H1 (cell line): ENCODE measurements at regions of chr10 and their contacts with region 1.

Region 1: DNA sequence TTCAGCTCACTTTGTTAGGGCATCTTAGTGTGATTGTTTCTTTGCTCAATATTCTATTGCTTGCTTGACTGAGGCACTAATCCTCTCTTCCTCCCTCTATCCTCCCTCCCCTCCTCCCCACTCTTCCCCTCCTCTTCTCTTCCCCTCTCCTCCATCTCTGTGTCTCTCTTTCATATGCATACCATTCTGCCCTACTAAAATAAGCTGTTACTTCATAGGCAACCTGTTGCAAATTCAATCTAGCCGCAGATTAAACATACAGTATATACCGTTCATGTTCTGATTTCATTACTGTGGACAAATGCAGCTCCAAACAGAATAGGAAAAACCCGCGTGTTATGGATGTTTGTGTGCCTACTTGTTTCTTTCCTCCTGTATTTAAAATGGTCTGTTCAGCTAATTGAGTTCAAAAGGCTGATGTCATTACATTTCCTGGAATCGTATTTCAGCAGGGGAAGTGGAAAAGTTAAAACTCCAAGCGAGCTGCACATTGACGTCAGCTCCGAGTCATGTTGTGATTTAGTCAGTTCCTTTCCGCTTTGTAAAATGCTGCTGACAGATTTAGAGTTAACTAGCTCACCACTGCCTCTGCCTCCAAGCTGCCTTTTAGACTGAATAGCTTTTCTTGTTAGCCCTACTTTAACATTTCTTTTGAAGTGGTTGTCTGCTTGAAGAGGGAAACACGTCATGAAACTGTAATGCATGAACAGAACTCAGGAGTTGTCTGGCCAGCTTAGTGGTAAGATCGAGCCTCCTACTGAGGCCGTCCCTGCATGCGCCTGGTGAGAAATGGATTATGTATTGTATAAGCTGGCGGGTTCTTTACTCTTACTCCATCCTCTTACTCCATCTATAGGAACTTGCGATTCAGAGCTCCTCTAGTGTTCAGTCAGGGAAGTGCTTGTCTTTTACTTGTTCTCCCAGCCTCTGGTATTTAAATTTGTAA is 69.0 kb downstream of the CREM start:
- DNase-seq: no peak
- H3K4me3 ChIP-seq: peak overlapping the region; percentile 31 to 62 (median 38); a peak in 7 of 8 replicates
- H3K27ac ChIP-seq: 0 out of 2 replicates have a peak overlapping the region, but pooled peaks have one; percentile 11
- H3K4me1 ChIP-seq: peaks cover 0 to 4% (median 2%) of the 10 kb centered on the region in 4 experiments; a peak in 3 of 7 replicates
- H3K27me3 ChIP-seq: no peaks in the 10 kb centered on the region
- CTCF ChIP-seq: peak in 2 of 3 experiments; percentile 67 to 68; a peak in 3 of 4 replicates
- EP300 ChIP-seq: no peak
- POLR2A ChIP-seq: peak in 1 of 2 experiments; percentile 39; a peak in 1 of 3 replicates
- RAD21 ChIP-seq: peak; percentile 60 to 63

Region 2: GRCh38 chr10:35119378-35119777 is 76.3 kb before region 1 on chr10:
- CTCF ChIA-PET with region 1: interaction called, 26 read pairs
- POLR2A ChIA-PET with region 1: no interaction called
- DNase-seq: no peak
- H3K4me3 ChIP-seq: no peak overlapping the region
- H3K27ac ChIP-seq: no peak overlapping the region
- H3K4me1 ChIP-seq: no peaks in the 10 kb centered on the region
- H3K27me3 ChIP-seq: no peaks in the 10 kb centered on the region
- CTCF ChIP-seq: no peak
- EP300 ChIP-seq: no peak
- POLR2A ChIP-seq: no peak
- RAD21 ChIP-seq: no peak

Region 3: GRCh38 chr10:35172574-35172973 is 23.1 kb before region 1 on chr10:
- CTCF ChIA-PET with region 1: interaction called, 11 read pairs
- POLR2A ChIA-PET with region 1: no interaction called
- DNase-seq: no peak
- H3K4me3 ChIP-seq: no peak overlapping the region
- H3K27ac ChIP-seq: no peak overlapping the region
- H3K4me1 ChIP-seq: no peaks in the 10 kb centered on the region
- H3K27me3 ChIP-seq: no peaks in the 10 kb centered on the region
- CTCF ChIP-seq: no peak
- EP300 ChIP-seq: no peak
- POLR2A ChIP-seq: no peak
- RAD21 ChIP-seq: no peak

Region 4: DNA sequence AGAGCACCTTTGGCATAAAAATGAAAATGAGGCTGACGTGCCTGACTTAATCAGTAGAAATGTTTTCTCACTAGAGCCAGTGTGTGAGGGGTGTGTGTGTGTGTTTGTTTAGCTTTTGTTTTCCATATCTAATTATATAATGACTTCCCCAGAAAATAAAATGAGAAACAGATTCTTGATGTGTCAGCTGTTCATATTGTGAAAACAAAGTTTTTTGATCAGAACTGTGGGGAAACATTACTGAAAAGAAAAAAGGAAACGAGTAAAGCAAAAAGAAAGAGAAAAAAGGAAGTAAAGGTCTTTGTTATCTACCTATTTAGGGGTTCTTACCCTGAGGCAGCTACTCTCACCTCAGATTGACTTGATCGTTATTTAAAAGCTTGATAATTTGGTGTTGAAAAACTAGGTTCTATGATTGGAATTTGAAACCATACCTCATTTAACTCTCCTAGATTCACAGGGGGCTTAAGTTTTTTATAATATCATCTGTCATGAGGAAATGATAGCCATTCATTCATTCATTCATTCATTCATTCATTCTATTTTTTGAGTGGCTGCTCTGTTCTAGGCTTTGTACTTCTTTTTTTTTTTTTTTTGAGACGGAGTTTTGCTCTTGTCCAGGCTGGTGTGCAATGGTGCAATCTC is 11.0 kb before region 1 on chr10:
- CTCF ChIA-PET with region 1: interaction called, 22 read pairs
- POLR2A ChIA-PET with region 1: interaction called, 3 read pairs
- DNase-seq: no peak
- H3K4me3 ChIP-seq: no peak overlapping the region
- H3K27ac ChIP-seq: no peak overlapping the region
- H3K4me1 ChIP-seq: no peaks in the 10 kb centered on the region
- H3K27me3 ChIP-seq: no peaks in the 10 kb centered on the region
- CTCF ChIP-seq: no peak
- EP300 ChIP-seq: no peak
- POLR2A ChIP-seq: no peak
- RAD21 ChIP-seq: no peak

Region 5: DNA sequence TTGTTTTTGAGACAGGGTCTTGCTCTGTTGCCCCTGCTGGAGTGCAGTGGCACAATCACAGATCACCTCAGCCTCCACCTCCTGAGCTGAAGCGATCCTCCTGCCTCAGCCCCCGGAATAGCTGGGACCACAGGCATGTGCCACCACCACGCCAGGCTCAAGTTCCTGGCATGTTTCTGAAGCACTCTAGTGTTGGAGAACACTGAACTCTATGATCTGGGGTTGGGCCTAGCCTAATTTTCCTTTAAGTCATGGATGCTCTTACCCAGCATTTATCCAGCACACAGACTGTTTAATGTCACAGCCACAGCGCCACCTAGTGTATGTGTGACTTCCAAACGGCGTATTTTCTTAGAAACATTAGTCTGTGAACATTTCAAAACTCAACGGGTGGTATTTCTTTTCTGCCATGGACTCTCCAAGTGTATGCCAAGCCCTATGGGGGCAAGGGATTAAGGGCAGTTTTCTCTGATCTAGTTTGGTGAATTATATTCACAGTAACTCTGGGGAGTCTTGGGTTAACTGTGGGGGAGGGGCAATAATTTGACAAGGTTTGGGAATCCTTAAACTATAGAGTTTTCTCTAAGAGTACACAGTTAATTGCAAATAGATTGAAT is 22.8 kb after region 1 on chr10:
- CTCF ChIA-PET with region 1: interaction called, 21 read pairs
- POLR2A ChIA-PET with region 1: no interaction called
- DNase-seq: peak in 1 of 2 experiments; percentile 77
- H3K4me3 ChIP-seq: no peak overlapping the region
- H3K27ac ChIP-seq: no peak overlapping the region
- H3K4me1 ChIP-seq: no peaks in the 10 kb centered on the region; a peak in 1 of 7 replicates
- H3K27me3 ChIP-seq: peaks cover 0 to 1% (median 0%) of the 10 kb centered on the region in 4 experiments; a peak in 1 of 7 replicates
- CTCF ChIP-seq: peak in 2 of 3 experiments; percentile 81 to 83; a peak in 3 of 4 replicates
- EP300 ChIP-seq: no peak
- POLR2A ChIP-seq: no peak
- RAD21 ChIP-seq: peak; percentile 75 to 85

Region 6: DNA sequence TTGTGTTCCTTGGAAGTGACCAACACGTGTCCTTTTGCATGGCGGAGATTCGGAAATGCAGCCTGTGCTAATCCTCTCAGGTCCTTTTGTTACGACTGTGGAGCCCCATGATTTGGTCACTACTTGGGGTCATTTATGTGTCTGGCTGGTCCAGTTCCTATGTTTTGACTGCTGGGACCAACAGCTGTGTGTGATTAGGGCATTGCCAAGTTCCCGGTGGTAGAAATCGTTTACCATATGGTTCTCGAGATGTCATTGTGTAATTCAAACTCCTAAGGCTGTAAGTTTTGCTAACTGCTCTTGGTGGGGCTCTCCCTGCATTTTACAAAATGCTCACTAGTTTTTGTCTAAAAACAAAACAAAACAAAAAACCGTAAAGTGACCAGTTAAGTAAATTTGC is 202.7 kb after region 1 on chr10:
- CTCF ChIA-PET with region 1: no interaction called
- POLR2A ChIA-PET with region 1: no interaction called
- DNase-seq: no peak
- H3K4me3 ChIP-seq: no peak overlapping the region
- H3K27ac ChIP-seq: no peak overlapping the region
- H3K4me1 ChIP-seq: peaks cover 20 to 39% (median 29%) of the 10 kb centered on the region in 4 experiments
- H3K27me3 ChIP-seq: no peaks in the 10 kb centered on the region
- CTCF ChIP-seq: no peak
- EP300 ChIP-seq: no peak
- POLR2A ChIP-seq: no peak
- RAD21 ChIP-seq: no peak

Region 7: DNA sequence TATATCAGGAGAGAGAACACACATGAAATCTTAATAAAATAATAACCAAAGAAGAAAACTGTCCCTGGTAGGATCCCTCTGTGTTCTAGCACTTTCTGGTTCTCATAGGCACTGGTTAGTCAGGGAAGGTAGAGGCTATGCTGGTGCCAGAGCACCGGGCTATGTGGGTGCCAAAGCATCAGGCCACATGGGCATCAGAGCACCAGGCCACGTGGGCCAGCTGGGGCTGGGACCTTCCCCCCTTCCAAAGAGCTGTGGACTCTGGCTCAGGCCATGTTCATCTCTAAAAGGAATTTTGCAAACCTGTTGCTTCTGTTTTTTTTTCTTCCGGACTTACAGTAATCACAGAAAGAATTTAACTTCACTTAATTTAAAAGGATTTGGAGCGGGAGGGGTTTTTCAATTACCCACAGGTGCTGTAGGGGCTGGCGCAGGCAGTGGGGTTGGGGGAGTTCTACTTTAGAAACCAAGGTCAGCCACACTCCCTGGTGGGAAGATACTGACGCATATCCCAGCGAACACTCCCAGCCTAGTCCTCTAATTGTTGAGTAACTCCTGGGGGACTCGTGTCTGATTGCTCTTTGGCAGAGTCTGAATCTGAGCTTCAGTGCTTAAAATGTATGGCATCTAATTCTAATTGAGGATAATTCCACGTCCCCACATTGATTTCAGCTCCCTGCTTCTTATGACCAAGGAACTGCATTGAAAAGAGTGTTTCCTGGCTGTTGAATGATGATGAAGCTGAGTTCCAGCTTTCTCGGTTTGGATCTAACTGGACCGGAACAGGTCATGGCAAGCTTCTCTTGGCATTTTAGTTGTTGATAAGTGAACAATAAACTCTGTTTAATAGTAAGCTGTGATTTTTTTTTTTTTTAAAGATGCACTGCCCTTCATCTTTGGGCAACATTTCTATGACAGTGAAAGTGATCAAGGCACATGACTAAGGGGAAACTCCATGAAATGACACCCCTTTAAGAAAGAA is 557.1 kb after region 1 on chr10:
- CTCF ChIA-PET with region 1: no interaction called
- POLR2A ChIA-PET with region 1: no interaction called
- DNase-seq: no peak
- H3K4me3 ChIP-seq: no peak overlapping the region
- H3K27ac ChIP-seq: no peak overlapping the region
- H3K4me1 ChIP-seq: no peaks in the 10 kb centered on the region
- H3K27me3 ChIP-seq: no peaks in the 10 kb centered on the region
- CTCF ChIP-seq: no peak
- EP300 ChIP-seq: no peak
- POLR2A ChIP-seq: no peak
- RAD21 ChIP-seq: no peak